Activated T-helper 2 cell treated with anti-CD3 and anti-CD28 coated beads, Interferon-gamma antibody, Interleukin-2, Interleukin-4, amounts not matched to agents 10 μg/mL and 5 μg/mL and 100 μg/mL, durations not matched to agents 14 hours and 24 hours and 36 hours (primary cell): ENCODE measurements at regions of chr11 and their contacts with region 1.

Region 1: DNA sequence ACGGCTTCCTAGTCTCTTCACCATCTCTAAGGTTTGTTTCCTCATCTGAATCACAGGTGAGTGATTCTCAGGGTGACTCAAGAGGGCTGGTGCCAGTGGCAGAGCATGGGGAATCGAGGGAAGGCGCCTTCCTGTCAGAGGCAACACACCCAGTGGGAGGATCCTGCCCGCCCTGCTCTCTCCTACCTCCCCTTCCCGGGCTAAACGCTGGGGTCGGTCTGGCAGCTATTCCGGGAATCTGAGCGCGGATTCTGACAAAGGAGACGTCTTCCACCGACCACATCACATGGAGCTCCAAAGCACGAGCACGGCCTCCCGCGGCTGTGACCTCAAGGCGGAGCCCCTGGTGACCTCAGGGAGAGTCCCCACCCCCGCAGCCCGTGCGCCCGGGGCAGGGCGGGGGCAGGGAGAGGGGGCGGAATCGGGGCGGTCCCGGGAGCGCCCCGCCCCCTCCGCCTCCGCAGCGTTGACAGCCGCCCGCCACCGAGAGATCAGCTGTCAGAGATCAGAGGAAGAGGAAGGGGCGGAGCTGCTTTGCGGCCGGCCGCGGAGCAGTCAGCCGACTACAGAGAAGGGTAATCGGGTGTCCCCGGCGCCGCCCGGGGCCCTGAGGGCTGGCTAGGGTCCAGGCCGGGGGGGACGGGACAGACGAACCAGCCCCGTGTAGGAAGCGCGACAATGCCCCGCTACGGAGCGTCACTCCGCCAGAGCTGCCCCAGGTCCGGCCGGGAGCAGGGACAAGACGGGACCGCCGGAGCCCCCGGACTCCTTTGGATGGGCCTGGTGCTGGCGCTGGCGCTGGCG is at the start of gene SMPD1:
- DNase-seq: peak; percentile 89
- H3K4me3 Mint-ChIP-seq: peak within 1 kb of the TSS; percentile 87
- H3K27ac Mint-ChIP-seq: peak within 1 kb of the TSS; percentile 98
- H3K4me1 Mint-ChIP-seq: peaks cover 24% of the 10 kb centered on the region
- H3K27me3 Mint-ChIP-seq: no peaks in the 10 kb centered on the region
- total RNA-seq, gene SMPD1: 15.4 and 16.0 TPM in 2 replicates

Region 2: GRCh38 chr11:5857590-5857989 is 532.5 kb before region 1 on chr11 and contains the start of gene OR52E8:
- intact Hi-C with region 1: no loop called
- DNase-seq: no peak
- H3K4me3 Mint-ChIP-seq: no peak within 1 kb of the TSS
- H3K27ac Mint-ChIP-seq: no peak within 1 kb of the TSS
- H3K4me1 Mint-ChIP-seq: no peaks in the 10 kb centered on the region
- H3K27me3 Mint-ChIP-seq: no peaks in the 10 kb centered on the region
- total RNA-seq, gene OR52E8: not detected in 2 replicates

Region 3: DNA sequence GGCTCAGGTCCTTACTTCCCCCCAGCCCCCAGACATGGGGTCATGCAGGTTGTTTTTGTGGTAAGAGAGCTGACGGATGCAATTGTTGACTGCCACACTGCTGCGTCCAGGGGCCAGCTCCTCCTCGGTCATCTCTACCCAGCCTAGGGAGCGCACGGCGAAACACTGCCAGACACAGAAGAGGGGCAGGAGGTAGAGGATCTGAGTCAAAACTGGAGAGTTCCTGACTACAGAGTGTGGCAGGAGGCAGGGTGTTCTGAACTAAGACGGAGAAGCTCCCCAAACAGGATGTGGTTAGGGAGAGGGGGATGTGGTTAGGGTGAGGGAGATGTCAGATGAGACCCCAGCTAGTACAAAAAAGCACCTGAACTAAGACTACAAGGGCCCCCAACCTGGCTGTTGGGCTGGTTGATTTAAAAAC is 12.4 kb after region 1 on chr11:
- intact Hi-C with region 1: loop called (anchors 1 kb)
- DNase-seq: peak; percentile 78
- H3K4me3 Mint-ChIP-seq: peak overlapping the region; percentile 64
- H3K27ac Mint-ChIP-seq: peak overlapping the region; percentile 93
- H3K4me1 Mint-ChIP-seq: peaks cover 56% of the 10 kb centered on the region
- H3K27me3 Mint-ChIP-seq: no peaks in the 10 kb centered on the region

Region 4: DNA sequence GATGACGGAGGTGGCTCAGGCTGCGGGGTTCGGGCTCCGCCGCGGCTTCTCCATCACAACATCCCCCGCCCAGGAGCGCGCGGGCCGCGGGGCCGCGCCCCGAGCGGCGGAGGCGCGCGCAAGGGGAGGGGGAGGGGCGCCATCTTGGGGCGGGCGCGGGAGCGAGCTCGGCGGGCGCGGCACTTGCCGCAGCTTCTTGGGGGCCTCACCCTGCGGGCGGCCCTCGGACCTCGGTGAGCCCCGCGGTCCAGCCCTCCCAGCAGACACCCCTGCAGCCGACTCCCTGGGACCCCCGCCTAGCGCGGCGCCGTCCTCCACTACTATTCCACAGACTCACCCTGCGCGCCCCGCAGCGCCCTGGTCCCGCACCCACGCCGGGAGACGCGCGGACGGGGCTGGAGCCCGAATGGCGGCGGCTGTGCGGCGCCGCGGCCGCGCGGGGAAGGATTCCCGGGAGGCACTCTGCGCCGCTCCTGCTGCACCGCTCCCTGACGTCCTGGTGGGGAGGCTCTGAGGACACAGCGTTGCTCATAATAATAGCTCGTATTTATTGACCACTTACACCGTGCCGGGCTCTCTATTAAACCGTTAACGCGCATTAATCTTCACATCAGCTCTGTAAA is 29.0 kb after region 1 on chr11 and contains the start of gene APBB1:
- intact Hi-C with region 1: loop called (anchors 1 kb)
- DNase-seq: peak; percentile 68
- H3K4me3 Mint-ChIP-seq: peak within 1 kb of the TSS; percentile 72
- H3K27ac Mint-ChIP-seq: peak within 1 kb of the TSS; percentile 25
- H3K4me1 Mint-ChIP-seq: peaks cover 4% of the 10 kb centered on the region
- H3K27me3 Mint-ChIP-seq: peaks cover 31% of the 10 kb centered on the region
- total RNA-seq, gene APBB1: 31.0 and 33.0 TPM in 2 replicates

Region 5: DNA sequence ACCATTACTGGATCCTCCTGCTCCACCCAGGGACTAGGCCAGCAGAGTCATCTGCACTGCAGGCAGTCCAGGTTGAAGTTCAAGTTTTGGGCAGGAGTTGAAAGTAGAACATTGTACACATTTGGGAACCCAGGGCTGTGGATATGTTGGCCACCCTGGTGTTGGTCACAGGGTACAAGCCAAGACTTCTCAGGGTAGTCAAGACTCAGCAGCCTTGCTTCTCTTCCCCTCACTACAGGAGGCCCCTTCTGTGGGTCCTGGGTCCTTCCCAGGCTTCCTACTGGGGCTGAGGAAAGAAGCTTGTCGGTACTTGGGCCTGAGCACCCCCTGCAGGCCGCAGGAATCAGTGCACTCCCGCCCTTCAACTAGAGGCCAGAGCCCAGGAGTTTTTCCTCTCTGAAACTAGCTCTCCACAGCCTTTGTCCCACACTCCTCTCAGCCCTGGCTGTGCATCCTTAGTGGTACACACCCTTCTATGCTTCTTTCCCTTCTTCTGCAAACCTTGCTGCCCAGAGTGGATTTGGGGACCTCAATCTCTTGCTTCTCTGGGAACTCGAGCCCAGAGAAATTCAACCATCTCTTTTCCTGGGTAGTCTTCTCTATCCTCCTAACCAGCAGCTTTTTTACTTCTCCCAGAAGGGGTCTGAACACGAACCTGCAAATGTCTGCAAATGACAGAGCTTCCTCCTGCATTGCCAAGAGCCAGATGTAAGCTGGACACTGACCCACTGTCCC is 53.3 kb after region 1 on chr11:
- intact Hi-C with region 1: loop called (anchors 5 kb)
- DNase-seq: peak; percentile 27
- H3K4me3 Mint-ChIP-seq: no peak overlapping the region
- H3K27ac Mint-ChIP-seq: no peak overlapping the region
- H3K4me1 Mint-ChIP-seq: no peaks in the 10 kb centered on the region
- H3K27me3 Mint-ChIP-seq: peaks cover 10% of the 10 kb centered on the region

Region 6: GRCh38 chr11:6481012-6481923 is 91.1 kb after region 1 on chr11 and contains the starts of genes ARFIP2 and TIMM10B:
- intact Hi-C with region 1: loop called (anchors 1 kb)
- DNase-seq: peak; percentile 97
- H3K4me3 Mint-ChIP-seq: peak within 1 kb of the TSS; percentile 88
- H3K27ac Mint-ChIP-seq: peak within 1 kb of the TSS; percentile 93
- H3K4me1 Mint-ChIP-seq: peaks cover 25% of the 10 kb centered on the region
- H3K27me3 Mint-ChIP-seq: no peaks in the 10 kb centered on the region
- total RNA-seq, gene ARFIP2: 46.8 and 48.6 TPM in 2 replicates
- total RNA-seq, gene TIMM10B: 42.9 and 43.0 TPM in 2 replicates

Region 7: GRCh38 chr11:6612213-6613041 is 222.3 kb after region 1 on chr11 and contains the start of gene TAF10:
- intact Hi-C with region 1: loop called (anchors 2 kb)
- DNase-seq: peak; percentile 95
- H3K4me3 Mint-ChIP-seq: peak within 1 kb of the TSS; percentile 95
- H3K27ac Mint-ChIP-seq: peak within 1 kb of the TSS; percentile 83
- H3K4me1 Mint-ChIP-seq: peaks cover 30% of the 10 kb centered on the region
- H3K27me3 Mint-ChIP-seq: no peaks in the 10 kb centered on the region
- total RNA-seq, gene TAF10: 134 and 142 TPM in 2 replicates